Activated CD8-positive, alpha-beta T cell treated with anti-CD3 and anti-CD28 coated beads, Interleukin-2, amount 10 ng/mL, durations not matched to agents 7 days and 5 days (primary cell): ENCODE measurements at regions of chr22 and their contacts with region 1.

Region 1: GRCh38 chr22:42090596-42091454 is at the start of gene NDUFA6:
- DNase-seq: peak; percentile 99
- ATAC-seq: peak; percentile 98
- H3K4me3 Mint-ChIP-seq: peak within 1 kb of the TSS; percentile 98
- H3K27ac Mint-ChIP-seq: peak within 1 kb of the TSS; percentile 100
- H3K4me1 Mint-ChIP-seq: peaks cover 23% of the 10 kb centered on the region
- H3K27me3 Mint-ChIP-seq: no peaks in the 10 kb centered on the region
- total RNA-seq, gene NDUFA6: 90.7 to 102 TPM

Region 2: DNA sequence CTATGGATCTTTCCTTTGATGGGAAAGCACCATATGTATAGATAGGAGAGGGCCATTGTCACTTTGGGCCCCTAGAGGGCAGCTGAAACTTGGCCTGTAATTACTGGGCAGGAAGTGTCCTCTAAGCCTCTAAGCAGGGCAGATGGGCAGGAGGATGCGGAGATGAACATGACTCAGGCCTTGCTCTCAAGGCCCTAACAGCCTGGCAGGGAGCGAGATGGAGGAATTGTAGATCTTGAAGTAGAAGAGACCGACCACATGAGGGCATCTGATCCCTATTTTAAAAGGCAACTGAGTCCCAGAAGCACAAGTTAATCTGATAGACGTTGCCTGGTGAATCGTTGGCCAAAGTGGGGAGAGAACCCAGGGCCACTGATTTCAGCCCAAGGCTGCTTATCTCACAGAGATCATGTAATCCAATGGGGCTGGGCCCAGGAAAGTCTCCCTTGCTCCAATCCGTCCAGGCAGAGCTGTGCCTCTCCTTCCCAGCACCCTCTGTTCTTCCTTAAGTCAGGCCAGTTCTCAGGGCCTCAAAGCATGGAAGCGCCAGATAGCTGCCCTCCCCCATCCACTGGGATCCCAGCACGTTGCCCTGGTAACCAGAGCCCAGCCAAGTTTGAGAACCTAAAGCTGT is 124.1 kb before region 1 on chr22:
- CTCF ChIA-PET with region 1: interaction called, 21 read pairs
- POLR2A ChIA-PET with region 1: interaction called, 4 read pairs
- DNase-seq: peak; percentile 57
- ATAC-seq: peak; percentile 62
- H3K4me3 Mint-ChIP-seq: no peak overlapping the region
- H3K27ac Mint-ChIP-seq: no peak overlapping the region
- H3K4me1 Mint-ChIP-seq: no peaks in the 10 kb centered on the region
- H3K27me3 Mint-ChIP-seq: peaks cover 2% of the 10 kb centered on the region

Region 3: DNA sequence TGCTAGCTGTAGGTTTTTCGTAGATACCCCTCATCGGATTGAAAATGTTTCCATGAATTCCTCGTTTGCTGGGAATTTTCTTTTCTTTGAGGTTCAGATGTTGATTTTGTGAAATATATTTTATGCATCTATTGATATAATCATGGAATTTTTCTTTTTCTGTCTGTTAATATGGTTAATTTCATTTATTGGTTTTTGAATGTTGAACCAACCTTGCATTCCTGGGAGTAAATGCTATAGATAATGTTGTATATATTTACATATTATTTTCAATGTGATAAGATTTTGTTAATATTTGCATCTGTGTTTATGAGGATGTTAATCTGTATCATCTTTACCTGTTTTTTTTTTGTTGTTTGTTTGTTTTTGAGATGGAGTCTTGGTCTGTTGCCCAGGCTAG is 10.4 kb after region 1 on chr22:
- CTCF ChIA-PET with region 1: interaction called, 11 read pairs
- POLR2A ChIA-PET with region 1: interaction called, 6 read pairs
- DNase-seq: no peak
- ATAC-seq: no peak
- H3K4me3 Mint-ChIP-seq: no peak overlapping the region
- H3K27ac Mint-ChIP-seq: no peak overlapping the region
- H3K4me1 Mint-ChIP-seq: no peaks in the 10 kb centered on the region
- H3K27me3 Mint-ChIP-seq: no peaks in the 10 kb centered on the region

Region 4: GRCh38 chr22:42116848-42117424 is 26.1 kb after region 1 on chr22:
- CTCF ChIA-PET with region 1: interaction called, 24 read pairs
- POLR2A ChIA-PET with region 1: interaction called, 9 read pairs
- DNase-seq: no peak
- ATAC-seq: no peak
- H3K4me3 Mint-ChIP-seq: no peak overlapping the region
- H3K27ac Mint-ChIP-seq: no peak overlapping the region
- H3K4me1 Mint-ChIP-seq: peaks cover 35% of the 10 kb centered on the region
- H3K27me3 Mint-ChIP-seq: no peaks in the 10 kb centered on the region

Region 5: GRCh38 chr22:42236268-42236667 is 145.4 kb after region 1 on chr22:
- CTCF ChIA-PET with region 1: no interaction called
- POLR2A ChIA-PET with region 1: no interaction called
- DNase-seq: no peak
- ATAC-seq: no peak
- H3K4me3 Mint-ChIP-seq: no peak overlapping the region
- H3K27ac Mint-ChIP-seq: no peak overlapping the region
- H3K4me1 Mint-ChIP-seq: peaks cover 8% of the 10 kb centered on the region
- H3K27me3 Mint-ChIP-seq: no peaks in the 10 kb centered on the region

Region 6: GRCh38 chr22:42444077-42444904 is 353.5 kb after region 1 on chr22:
- CTCF ChIA-PET with region 1: interaction called, 33 read pairs
- POLR2A ChIA-PET with region 1: interaction called, 21 read pairs
- DNase-seq: peak; percentile 86
- ATAC-seq: peak; percentile 82
- H3K4me3 Mint-ChIP-seq: peak overlapping the region; percentile 58
- H3K27ac Mint-ChIP-seq: peak overlapping the region; percentile 79
- H3K4me1 Mint-ChIP-seq: peaks cover 31% of the 10 kb centered on the region
- H3K27me3 Mint-ChIP-seq: no peaks in the 10 kb centered on the region